Posterior vena cava (tissue), 2 donors: ENCODE measurements at regions of chr3 and their contacts with region 1.

Region 1: DNA sequence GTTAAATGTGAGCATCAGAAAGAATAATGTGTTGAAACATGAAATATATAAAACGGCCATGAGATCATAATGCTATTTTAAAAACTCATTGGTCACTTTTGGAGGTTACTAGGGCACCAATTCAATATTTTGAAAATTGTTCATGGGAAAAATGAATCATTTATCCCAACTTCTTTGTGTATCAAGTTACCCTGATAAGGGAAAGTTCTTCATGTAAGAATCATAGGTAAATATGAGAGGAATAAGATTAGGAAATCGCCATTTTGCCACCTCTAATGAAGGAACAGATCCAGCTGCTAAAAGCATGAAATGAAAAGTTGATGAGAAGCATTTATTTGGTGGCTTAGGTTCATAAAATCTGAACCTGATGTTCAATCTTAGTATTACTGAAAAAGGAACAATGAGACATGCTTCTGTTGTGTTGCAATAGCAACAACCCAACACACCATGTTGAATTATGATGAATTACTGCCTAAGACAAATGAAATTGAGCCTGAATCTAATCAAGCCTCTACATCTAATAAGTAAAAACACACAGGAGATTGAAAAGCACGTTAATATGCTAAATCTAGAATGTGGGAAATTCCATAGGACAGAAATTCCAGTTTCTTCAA is 32.5 kb downstream of the ABHD5 start:
- DNase-seq: no peak

Region 2: GRCh38 chr3:43742920-43743319 is 19.7 kb after region 1 on chr3:
- intact Hi-C with region 1: no loop called
- DNase-seq: no peak

Region 3: DNA sequence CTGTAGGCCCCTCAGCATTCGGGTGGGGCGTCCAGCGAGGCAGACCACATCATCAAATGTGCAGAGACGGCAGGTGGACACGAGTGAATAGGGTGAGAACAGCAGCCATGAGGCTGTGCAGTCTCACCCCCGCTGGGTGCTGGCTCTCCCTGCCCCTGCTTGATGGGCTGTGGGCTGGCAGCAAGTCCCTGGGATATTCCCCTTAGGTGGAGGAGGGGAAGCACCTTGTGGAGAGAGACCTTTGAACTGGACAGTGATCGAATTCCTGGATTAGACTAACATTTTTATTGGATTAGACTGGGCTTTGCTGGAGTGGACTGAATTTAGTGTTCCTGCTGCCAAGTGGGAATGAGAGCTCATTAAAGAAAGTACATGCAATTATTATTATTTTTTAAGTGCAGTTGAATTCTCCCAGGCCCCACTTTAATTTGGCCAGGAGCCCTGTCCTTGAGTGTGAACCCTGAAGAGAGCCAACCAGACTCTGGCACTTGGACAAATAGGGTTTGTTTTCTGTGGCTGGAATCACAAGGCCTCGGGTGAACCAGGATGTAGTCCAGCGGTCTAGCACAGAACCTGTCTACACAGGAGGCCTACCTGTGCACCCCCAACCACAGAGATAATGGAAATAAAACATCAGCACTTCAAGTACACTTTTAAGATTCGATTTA is 160.6 kb after region 1 on chr3:
- intact Hi-C with region 1: no loop called
- DNase-seq: no peak

Region 4: GRCh38 chr3:45677033-45677433 is 1953.8 kb after region 1 on chr3:
- intact Hi-C with region 1: loop called in 1 of 2 experiments (anchors 5 kb)
- DNase-seq: no peak